Prostate gland (tissue), 2 donors: ENCODE measurements at regions of chr2 and their contacts with region 1.

Region 1: GRCh38 chr2:189580658-189581353 is at the start of gene SLC40A1:
- DNase-seq: peak; percentile 74
- H3K4me3 ChIP-seq: peak within 1 kb of the TSS; percentile 54 to 65
- H3K27ac ChIP-seq: peak within 1 kb of the TSS; percentile 83 to 86
- H3K4me1 ChIP-seq: no peaks in the 10 kb centered on the region
- H3K27me3 ChIP-seq: no peaks in the 10 kb centered on the region
- CTCF ChIP-seq: no peak
- POLR2A ChIP-seq: peak; percentile 61
- total RNA-seq, gene SLC40A1: 86.7 to 169 TPM

Region 2: GRCh38 chr2:189466660-189467059 is 114.1 kb before region 1 on chr2:
- intact Hi-C with region 1: loop called (anchors 10 kb)
- DNase-seq: no peak
- H3K4me3 ChIP-seq: no peak overlapping the region
- H3K27ac ChIP-seq: no peak overlapping the region
- H3K4me1 ChIP-seq: no peaks in the 10 kb centered on the region
- H3K27me3 ChIP-seq: no peaks in the 10 kb centered on the region
- CTCF ChIP-seq: peak; percentile 22 to 69 (median 60)
- POLR2A ChIP-seq: no peak

Region 3: GRCh38 chr2:189549449-189549832 is 31.4 kb before region 1 on chr2:
- intact Hi-C with region 1: loop called (anchors 5 kb)
- DNase-seq: no peak
- H3K4me3 ChIP-seq: no peak overlapping the region
- H3K27ac ChIP-seq: peak overlapping the region in 1 of 2 donors; percentile 34
- H3K4me1 ChIP-seq: no peaks in the 10 kb centered on the region
- H3K27me3 ChIP-seq: no peaks in the 10 kb centered on the region
- CTCF ChIP-seq: no peak
- POLR2A ChIP-seq: no peak